ENCODE measurements at regions of chr15 and their contacts with region 1.

Region 1: DNA sequence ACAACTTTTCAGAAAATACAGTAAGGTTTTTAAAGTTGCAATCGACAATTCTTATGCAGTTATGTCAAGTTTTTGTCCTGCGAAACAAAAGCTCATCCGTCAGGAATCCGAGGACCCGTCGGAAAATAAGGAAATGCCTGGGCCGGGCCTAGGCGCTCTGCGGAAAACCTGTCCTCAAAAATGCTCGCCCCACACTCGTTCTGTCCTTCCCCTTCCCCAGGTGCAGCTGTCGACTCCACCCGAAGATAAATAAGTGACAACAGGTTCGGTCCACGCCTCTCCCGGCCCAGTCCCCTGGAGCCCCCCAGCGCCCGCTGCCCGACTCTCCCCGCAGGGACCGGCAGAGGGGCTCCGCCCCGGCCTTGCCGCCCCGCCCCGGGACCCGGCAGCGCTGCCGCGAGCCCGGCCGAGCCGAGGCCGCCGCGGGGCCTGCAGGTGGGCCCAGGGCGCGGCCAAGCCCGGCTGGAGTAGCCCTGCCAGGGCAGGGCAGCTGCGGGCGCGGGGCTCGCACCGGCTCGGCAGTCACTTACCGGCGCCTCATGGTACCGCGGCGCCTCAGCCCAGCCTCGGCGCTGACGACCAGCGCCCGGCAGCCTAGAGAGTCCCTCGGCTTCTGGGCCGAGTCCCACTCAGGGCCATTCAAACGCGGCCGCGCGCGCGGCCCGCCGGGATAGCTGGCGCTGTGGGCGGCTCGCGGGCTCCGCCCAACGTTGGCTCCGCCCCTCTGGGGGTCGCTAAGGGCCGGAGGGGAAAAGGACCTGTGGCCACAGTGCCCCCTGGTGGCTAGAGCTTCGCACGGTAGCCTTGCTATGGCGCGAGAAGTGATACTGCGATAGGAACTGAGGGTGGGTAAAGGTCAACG is at the start of gene KATNBL1:
- H3K4me3 ChIP-seq: peak within 1 kb of the TSS; percentile 73
- H3K27ac ChIP-seq: peak within 1 kb of the TSS; percentile 82
- H3K4me1 ChIP-seq: no peaks in the 10 kb centered on the region
- CTCF ChIP-seq: peak; percentile 86

Region 2: DNA sequence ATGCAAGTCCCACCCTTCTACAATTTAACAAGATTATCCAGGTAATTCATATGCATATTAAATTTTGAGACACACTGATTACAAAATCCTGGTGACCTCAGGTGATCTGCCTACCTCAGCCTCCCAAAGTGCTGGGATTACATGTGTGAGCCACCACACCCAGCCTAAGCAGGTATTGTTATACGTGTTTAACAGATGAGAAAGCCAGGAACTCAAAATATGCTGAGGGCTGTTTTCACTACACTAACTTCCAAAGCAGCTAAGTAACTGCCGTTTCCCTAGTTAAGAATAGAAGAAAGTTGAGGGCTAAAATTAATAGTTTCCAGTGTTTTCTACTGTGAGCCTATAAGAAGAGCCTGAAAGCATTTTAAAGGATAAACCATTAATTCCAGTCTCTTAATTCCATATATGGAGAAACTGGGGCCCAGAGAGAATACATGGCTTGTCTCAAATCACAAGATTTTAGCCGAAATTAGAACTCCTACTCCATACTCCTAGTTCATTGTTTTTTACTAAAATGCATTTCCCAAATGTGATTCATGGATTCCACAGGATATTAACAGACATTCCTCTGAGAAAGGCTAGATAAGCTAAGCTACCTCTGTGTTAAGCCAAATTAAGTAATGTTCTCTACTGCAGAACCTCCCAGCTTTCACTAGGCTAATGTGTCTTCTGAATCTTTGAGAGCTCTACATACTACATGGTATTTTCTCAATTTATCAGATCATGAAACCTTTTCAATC is 153.6 kb before region 1 on chr15:
- CTCF ChIA-PET with region 1: interaction called, 10 read pairs
- POLR2A ChIA-PET with region 1: no interaction called
- H3K4me3 ChIP-seq: no peak overlapping the region
- H3K27ac ChIP-seq: no peak overlapping the region
- H3K4me1 ChIP-seq: no peaks in the 10 kb centered on the region
- CTCF ChIP-seq: no peak

Region 3: DNA sequence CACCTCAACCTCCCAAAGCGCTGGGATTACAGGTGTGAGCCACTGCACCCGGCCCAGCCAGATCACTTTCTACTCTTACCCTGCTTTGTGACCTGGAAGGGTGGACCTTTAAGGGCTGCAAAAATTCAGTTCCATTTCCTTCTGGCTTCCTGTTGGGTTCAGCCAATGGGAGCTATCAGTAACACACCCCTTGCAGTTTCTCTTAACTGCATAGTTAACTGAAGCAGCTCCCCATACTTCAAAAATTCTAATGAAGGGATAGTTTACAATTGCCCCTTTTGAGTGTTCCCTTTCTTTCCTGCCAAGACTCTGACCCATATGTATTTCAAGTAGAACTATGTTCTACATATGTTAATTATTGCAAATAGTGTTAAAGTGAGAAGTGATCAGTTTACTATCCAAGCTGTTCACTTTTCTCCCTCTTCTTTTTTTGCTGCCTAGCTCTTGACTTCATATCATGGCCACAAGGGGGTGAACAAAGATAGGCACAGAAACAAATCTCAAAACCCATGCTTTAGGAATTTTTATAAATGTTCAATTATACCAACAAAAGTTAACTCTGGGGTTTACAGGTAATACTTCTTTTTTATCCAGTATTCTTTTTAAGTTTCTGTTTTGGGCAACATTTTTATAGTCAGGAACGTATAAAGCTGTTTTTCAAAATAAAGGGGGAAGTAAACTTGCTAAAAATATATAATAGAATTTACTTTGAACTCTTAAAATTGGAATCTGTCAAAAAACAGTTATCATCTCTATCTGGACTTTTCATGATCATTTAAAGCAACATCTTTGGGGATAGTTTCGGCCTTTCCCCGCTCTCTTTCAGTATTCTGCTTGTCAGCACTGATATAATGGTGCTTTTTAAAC is 99.6 kb before region 1 on chr15:
- CTCF ChIA-PET with region 1: interaction called, 29 read pairs
- POLR2A ChIA-PET with region 1: interaction called, 9 read pairs
- H3K4me3 ChIP-seq: no peak overlapping the region
- H3K27ac ChIP-seq: no peak overlapping the region
- H3K4me1 ChIP-seq: no peaks in the 10 kb centered on the region
- CTCF ChIP-seq: no peak